ENCODE measurements at regions of chr1 and their contacts with region 1.

Region 1: GRCh38 chr1:197093226-197093885 is 26.3 kb upstream of the F13B start:
- DNase-seq: no peak
- H3K4me3 Mint-ChIP-seq: no peak overlapping the region
- H3K27ac Mint-ChIP-seq: no peak overlapping the region
- H3K4me1 Mint-ChIP-seq: peaks cover 15% of the 10 kb centered on the region
- H3K27me3 Mint-ChIP-seq: no peaks in the 10 kb centered on the region

Region 2: DNA sequence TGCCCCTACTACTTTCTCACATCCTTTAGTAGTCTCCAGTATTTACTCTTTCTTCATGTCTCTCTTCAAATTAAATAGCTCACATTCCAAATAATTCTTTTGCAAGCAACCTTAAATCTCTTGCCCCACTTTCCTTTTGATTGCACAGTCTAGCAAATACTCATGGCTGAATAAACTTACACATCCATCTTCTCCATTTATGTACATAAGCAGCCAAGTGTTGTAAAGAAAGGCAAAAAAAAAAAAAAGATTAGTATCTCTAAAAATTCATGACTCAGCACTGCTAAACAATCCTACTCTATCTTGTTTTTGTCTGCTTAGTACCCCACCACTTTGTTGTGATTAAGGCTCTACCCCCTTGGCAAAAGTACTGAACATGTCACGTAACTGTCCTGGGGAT is 68.9 kb before region 1 on chr1:
- intact Hi-C with region 1: no loop called
- DNase-seq: no peak
- H3K4me3 Mint-ChIP-seq: no peak overlapping the region
- H3K27ac Mint-ChIP-seq: no peak overlapping the region
- H3K4me1 Mint-ChIP-seq: no peaks in the 10 kb centered on the region
- H3K27me3 Mint-ChIP-seq: peaks cover 2% of the 10 kb centered on the region

Region 3: DNA sequence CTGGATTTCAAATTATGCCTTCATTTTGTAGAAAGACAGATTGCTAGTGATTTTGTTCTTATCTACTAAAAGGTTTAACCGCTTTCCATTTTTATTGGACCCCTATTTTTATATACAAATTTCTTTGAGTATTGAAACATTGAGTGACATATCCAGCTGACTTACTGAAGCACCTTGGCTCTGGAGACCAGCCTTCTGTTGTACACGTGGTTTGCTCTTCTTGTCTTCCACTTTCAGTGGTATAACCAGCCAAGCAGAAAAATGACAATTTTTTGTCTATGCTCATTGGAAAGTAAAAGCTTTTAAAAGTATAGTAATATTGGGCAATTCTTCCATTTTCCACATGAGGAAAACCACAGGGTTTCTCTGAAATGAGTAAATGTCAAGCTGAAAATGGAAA is 30.7 kb before region 1 on chr1:
- intact Hi-C with region 1: no loop called
- DNase-seq: no peak
- H3K4me3 Mint-ChIP-seq: no peak overlapping the region
- H3K27ac Mint-ChIP-seq: no peak overlapping the region
- H3K4me1 Mint-ChIP-seq: no peaks in the 10 kb centered on the region
- H3K27me3 Mint-ChIP-seq: peaks cover 5% of the 10 kb centered on the region

Region 4: DNA sequence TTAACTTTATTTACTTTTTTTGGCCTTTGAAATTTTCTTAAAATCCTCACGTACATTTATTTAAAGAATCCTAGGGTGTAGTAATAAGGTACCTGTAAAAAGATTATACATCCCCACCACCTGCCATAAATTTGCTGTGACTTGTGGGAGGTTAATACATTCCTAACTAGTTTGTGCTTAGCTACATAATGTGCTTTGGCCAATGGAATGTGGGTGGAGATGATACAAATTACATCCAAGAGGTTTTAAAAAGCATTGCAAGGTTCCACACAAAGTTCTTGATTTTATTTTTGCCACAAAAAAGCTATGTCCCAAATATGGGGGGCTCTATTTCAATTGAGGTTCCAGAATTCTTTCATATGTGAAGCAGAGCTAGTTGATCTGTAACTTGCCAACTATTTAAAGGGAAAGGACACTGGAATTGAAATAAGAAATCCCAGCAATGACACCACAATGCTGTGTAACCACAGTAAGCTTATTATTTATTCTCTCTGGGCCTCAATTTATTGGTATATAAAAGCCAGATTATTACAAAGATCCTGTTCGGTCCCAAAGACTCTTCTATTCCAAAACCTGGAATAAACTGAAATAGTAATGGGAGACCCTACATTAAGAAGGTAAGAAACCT is 37.4 kb after region 1 on chr1:
- intact Hi-C with region 1: loop called (anchors 5 kb)
- DNase-seq: no peak
- H3K4me3 Mint-ChIP-seq: no peak overlapping the region
- H3K27ac Mint-ChIP-seq: no peak overlapping the region
- H3K4me1 Mint-ChIP-seq: peaks cover 19% of the 10 kb centered on the region
- H3K27me3 Mint-ChIP-seq: no peaks in the 10 kb centered on the region